Heart left ventricle (tissue), 16 donors: ENCODE measurements at regions of chr5 and their contacts with region 1.

Region 1: GRCh38 chr5:148873690-148874485 is 47.5 kb downstream of the ADRB2 start:
- DNase-seq: no peak
- ATAC-seq: peak in 2 of 4 donors; percentile 22 to 57
- H3K4me3 ChIP-seq: no peak overlapping the region
- H3K27ac ChIP-seq: peak overlapping the region in 9 of 12 donors; percentile 4 to 71 (median 38)
- H3K4me1 ChIP-seq: peaks cover 16 to 43% (median 26%) of the 10 kb centered on the region in 12 donors
- H3K27me3 ChIP-seq: no peaks in the 10 kb centered on the region
- CTCF ChIP-seq: no peak
- POLR2A ChIP-seq: no peak

Region 2: GRCh38 chr5:148556835-148557234 is 317.1 kb before region 1 on chr5:
- intact Hi-C with region 1: no loop called
- DNase-seq: no peak
- ATAC-seq: no peak
- H3K4me3 ChIP-seq: no peak overlapping the region
- H3K27ac ChIP-seq: no peak overlapping the region
- H3K4me1 ChIP-seq: no peaks in the 10 kb centered on the region
- H3K27me3 ChIP-seq: no peaks in the 10 kb centered on the region
- CTCF ChIP-seq: no peak
- POLR2A ChIP-seq: no peak

Region 3: GRCh38 chr5:148831590-148832565 is 42.0 kb before region 1 on chr5:
- intact Hi-C with region 1: loop called in 3 of 10 experiments (anchors 5 kb)
- DNase-seq: no peak
- ATAC-seq: peak in 3 of 4 donors; percentile 7 to 22 (median 19)
- H3K4me3 ChIP-seq: peak overlapping the region in 9 of 12 donors; percentile 55 to 84 (median 66)
- H3K27ac ChIP-seq: peak overlapping the region in 11 of 12 donors; percentile 32 to 88 (median 62)
- H3K4me1 ChIP-seq: peaks cover 4 to 76% (median 44%) of the 10 kb centered on the region in 12 donors
- H3K27me3 ChIP-seq: no peaks in the 10 kb centered on the region
- CTCF ChIP-seq: no peak
- POLR2A ChIP-seq: no peak